ENCODE measurements at regions of chr12 and their contacts with region 1.

Region 1: DNA sequence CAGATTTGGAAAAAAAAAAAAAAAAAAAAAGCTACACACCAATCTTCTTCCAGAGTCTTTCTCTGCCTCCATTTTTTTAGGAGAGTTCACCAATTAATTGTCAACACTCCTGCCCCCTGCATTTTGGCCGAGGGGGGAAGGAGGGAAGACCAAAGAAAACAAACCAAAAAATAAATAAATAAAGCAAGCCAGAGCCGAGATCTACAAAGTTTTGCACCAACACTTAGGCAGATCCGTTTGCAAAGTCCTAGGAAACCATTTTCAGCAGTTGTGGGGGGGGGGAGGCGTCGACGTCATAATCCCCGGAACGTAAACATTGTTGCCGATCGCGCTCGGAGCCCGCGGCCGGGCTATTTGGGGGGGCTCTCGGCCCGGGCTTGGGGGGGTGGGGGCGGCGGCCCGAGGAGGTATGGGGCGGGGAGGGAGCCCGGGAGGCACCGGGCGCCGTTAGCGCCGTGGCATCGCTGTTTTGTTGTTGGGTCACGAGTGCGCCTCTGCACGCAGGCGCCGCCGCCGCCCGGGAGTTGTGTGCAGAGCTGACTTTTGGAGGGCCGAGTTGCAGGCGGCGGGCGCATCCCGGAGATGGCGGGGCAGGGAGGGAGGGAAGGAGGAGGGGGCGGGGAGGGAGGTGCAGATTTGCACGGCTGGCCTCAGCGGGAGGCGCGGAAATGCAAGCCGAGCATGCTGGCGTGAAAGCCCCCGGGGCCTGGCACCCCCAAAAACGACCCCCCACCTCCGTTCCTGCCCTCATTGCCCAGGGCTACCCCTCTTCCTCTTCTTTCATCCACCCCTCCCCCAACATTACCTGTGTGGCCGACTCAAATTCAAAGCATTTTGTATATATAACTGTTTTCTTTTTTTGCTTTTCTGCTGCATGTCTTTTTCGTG is 598 bp downstream of the KDM2B start:
- DNase-seq: peak; percentile 71 to 82 (median 76)
- H3K4me3 ChIP-seq: peak overlapping the region; percentile 42 to 90 (median 75)
- H3K27ac ChIP-seq: peak overlapping the region; percentile 72 to 97 (median 94)
- H3K27me3 ChIP-seq: no peaks in the 10 kb centered on the region
- CTCF ChIP-seq: peak in 3 of 56 donors; percentile 3 to 17 (median 4)

Region 2: DNA sequence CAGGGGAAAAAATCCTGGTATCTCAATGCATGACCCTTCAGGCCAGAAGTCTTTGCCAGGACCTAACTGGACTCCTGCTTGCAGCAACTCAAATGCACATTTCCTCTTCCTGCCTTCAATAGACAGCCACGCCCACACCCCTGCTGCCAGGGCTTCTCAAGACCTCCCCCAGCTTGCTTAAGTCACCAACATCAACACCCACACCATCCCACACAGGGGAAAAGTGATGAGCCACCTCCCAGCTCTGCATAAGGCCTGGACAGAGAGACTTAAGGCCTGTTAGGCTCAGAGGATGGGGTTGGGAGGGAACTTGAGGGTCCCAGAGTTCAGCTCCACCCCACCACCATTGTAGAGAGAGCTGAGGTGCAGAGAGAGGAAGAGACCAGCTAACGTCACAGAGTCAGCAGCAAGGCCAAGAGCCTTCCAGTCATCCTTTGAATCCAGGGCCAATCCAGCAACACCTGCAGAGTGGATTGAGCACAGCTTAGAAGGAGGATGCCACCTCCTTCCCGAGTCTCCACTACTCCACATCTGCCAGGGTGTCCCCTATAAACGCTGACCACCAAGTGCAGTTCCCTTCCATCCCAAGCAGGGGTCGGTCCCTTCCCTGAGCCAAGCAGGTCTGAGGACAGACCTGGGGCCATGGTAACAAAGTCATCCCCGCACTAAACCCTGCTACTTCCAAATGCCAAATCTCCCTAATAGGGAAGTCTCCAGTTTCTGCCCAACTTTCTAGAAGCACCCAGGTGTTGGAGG is 49.4 kb before region 1 on chr12:
- intact Hi-C with region 1: loop called (anchors 5 kb)
- DNase-seq: peak in 1 of 10 donors; percentile 57
- H3K4me3 ChIP-seq: no peak overlapping the region
- H3K27ac ChIP-seq: peak overlapping the region in 21 of 59 donors; percentile 3 to 77 (median 34)
- H3K27me3 ChIP-seq: no peaks in the 10 kb centered on the region
- CTCF ChIP-seq: no peak

Region 3: DNA sequence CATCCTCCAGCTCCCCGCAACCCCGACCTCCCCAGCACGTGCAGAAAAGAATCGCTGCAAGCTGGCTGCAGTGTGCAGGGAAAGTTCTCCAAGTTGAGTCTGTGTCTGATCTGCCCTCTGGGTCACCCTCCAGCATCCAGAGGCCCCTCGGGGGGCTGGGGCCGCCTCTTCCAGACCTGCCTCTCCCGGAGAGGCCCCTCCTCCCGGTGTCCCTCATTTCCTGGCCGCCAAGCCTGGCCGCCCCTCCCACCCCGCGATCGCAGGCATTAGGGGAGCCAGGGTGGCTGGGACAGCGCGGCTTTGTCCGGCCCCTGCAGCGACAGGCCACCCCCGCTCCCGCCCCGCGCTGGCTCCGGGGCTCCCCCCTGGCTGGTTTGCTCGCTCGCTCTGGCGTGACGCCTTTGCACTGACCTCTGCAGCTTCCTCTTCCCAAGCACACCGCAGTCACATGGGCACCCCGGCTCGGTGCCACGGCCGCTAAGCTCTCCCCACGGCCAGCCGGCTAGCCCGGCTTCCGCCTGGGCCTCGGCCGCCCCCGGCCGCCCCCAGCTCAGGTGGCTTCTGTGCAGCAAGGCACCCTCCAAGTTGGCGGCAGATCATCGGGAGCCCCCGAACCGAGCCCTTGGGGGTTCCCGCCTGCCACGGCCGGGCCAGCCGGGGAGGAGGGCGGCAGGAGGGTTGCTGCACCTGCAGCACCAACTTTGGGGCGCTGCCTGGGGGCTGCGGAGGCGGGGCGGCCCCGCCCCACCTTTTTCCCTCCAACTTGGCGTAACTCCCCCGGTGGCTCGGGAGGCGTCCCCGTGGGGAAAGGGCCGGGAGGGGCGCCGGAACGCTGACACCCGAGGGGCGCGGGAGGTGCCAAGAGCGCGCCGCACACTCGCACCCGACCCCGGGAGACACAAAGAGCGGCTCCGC is 43.1 kb before region 1 on chr12:
- intact Hi-C with region 1: loop called (anchors 5 kb)
- DNase-seq: peak; percentile 62 to 86 (median 76)
- H3K4me3 ChIP-seq: peak overlapping the region; percentile 54 to 92 (median 76)
- H3K27ac ChIP-seq: peak overlapping the region; percentile 24 to 96 (median 87)
- H3K27me3 ChIP-seq: no peaks in the 10 kb centered on the region
- CTCF ChIP-seq: peak in 4 of 56 donors; percentile 9 to 26 (median 18)

Measured in dorsolateral prefrontal cortex (tissue), 120 donors.